Heart right ventricle (tissue), 16 donors: ENCODE measurements at regions of chr2 and their contacts with region 1.

Region 1: DNA sequence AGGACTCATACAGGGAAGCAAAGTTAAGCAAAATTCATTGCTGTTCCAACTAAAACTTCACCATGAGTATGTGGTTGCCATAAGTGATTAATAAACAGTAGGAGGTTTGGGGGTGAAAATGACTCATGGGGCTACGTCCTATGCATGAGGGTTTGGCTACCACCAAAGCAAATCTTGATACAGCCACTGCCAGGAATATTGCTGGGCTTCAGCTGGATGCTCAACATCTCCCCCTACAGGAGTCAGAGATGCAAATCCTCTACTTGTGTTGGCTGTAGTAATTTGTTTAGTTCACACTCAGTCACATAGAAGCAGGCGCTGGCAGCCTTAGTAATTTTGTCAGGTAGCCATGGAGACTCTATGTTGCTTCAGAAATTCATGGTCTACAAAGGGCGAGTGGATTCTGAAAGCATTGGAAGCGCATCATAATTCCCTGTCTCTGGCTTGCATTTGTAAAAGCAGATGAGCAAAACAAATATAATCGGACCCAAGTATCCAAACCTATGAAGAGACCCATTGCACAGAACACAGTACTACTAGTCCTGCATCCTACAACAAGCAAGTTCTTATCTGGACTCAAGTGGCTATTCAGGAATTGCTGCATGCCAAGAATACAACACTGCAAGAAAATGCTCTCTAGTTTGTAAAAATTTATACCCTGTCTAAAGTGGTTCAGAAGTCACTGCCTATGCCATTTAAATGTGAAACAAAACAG is 76.0 kb downstream of the CD28 start:
- DNase-seq: peak in 1 of 2 donors; percentile 65
- ATAC-seq: peak in 7 of 8 donors; percentile 37 to 85 (median 64)
- H3K4me3 ChIP-seq: no peak overlapping the region
- H3K27ac ChIP-seq: peak overlapping the region in 5 of 10 donors; percentile 3 to 48 (median 13)
- H3K4me1 ChIP-seq: peaks cover 5 to 45% (median 32%) of the 10 kb centered on the region in 9 donors
- H3K27me3 ChIP-seq: no peaks in the 10 kb centered on the region
- CTCF ChIP-seq: peak; percentile 38 to 83 (median 68)

Region 2: GRCh38 chr2:203683932-203684556 is 98.4 kb before region 1 on chr2:
- intact Hi-C with region 1: loop called in 3 of 10 experiments (anchors 10 kb)
- DNase-seq: no peak
- ATAC-seq: peak in 6 of 8 donors; percentile 3 to 60 (median 12)
- H3K4me3 ChIP-seq: no peak overlapping the region
- H3K27ac ChIP-seq: peak overlapping the region; percentile 82 to 91 (median 86)
- H3K4me1 ChIP-seq: peaks cover 43 to 87% (median 79%) of the 10 kb centered on the region in 9 donors
- H3K27me3 ChIP-seq: no peaks in the 10 kb centered on the region
- CTCF ChIP-seq: no peak